OCI-LY7 (cell line): ENCODE measurements at regions of chr3 and their contacts with region 1.

Region 1: DNA sequence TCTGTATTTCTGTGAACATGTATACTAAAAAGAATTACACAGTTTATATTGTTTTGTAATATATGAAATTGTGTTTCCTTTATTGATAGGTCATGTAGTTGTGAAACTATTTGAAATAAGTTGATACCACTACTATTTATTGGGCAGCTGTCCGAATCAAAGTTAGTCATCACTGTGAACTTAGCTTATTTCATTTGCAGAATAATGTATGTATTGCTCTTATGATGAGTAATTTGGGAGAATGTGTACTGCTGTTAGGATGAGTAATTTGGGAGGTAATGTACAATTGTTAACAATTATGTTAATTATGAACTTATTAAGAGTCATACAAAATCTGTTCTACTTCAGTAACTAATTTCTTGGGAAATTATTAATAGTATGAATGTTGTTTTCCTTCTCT is 22.2 kb downstream of the FXR1 start:
- DNase-seq: no peak
- H3K4me3 ChIP-seq: no peak overlapping the region
- H3K27ac ChIP-seq: no peak overlapping the region
- H3K4me1 ChIP-seq: peaks cover 15% of the 10 kb centered on the region
- CTCF ChIP-seq: no peak

Region 2: DNA sequence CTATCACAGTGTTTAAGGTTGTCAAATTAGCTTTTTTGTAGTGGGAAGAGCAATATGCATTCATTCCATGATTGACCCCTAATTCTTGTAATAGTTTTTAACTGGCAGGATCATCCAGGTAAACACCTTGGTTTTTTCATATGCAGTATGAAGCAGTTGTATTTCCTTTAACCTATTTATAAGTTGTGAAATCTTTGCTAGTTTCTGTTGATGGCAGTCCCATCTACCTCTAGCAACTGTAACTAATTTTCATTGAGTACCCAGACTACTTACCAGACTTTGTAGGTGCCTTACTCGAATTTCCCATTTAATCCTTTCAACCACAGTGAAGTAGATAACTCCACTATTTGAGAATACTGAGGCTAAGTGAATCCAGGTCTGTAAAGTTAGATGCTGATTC is 16.1 kb before region 1 on chr3:
- CTCF ChIA-PET with region 1: no interaction called
- POLR2A ChIA-PET with region 1: interaction called, 12 read pairs
- intact Hi-C with region 1: no loop called
- DNase-seq: no peak
- H3K4me3 ChIP-seq: no peak overlapping the region
- H3K27ac ChIP-seq: no peak overlapping the region
- H3K4me1 ChIP-seq: peaks cover 35% of the 10 kb centered on the region
- CTCF ChIP-seq: no peak

Region 3: GRCh38 chr3:180973543-180973942 is 38.9 kb after region 1 on chr3:
- CTCF ChIA-PET with region 1: no interaction called
- POLR2A ChIA-PET with region 1: no interaction called
- intact Hi-C with region 1: no loop called
- DNase-seq: no peak
- H3K4me3 ChIP-seq: no peak overlapping the region
- H3K27ac ChIP-seq: no peak overlapping the region
- H3K4me1 ChIP-seq: no peaks in the 10 kb centered on the region
- CTCF ChIP-seq: no peak